ENCODE measurements at regions of chr2 and their contacts with region 1.

Region 1: DNA sequence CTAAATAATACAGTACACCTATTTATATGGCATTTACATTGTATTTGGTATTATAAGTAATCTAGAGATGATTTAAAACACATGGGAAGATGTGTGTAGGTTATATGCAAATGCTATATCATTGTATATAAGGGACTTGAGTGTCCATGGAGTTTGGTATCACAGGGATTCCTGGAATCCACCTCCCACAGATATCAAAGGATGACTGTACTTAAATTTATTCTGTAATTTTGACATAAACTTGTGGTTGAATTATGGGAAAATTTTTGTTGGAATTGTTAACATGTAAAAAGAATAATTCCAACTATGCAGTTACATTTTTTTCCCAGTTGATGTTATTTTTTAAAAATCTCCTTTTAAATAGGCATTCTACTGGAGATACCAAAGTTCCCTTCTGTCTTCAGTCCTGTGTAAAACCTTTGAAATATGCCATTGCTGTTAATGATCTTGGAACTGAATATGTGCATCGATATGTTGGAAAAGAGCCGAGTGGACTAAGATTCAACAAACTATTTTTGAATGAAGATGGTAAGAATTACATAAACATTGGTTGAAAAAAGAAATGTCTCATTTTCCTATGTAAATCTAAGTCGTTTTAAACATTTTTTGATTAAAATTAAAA is 24.1 kb downstream of the GLS start:
- DNase-seq: no peak
- H3K4me3 Mint-ChIP-seq: no peak overlapping the region
- H3K27ac Mint-ChIP-seq: no peak overlapping the region
- H3K4me1 Mint-ChIP-seq: peaks cover 9% of the 10 kb centered on the region
- H3K27me3 Mint-ChIP-seq: no peaks in the 10 kb centered on the region

Region 2: GRCh38 chr2:190887089-190887488 is 17.7 kb before region 1 on chr2:
- intact Hi-C with region 1: loop called (anchors 1 kb)
- DNase-seq: no peak
- H3K4me3 Mint-ChIP-seq: no peak overlapping the region
- H3K27ac Mint-ChIP-seq: no peak overlapping the region
- H3K4me1 Mint-ChIP-seq: peaks cover 62% of the 10 kb centered on the region
- H3K27me3 Mint-ChIP-seq: no peaks in the 10 kb centered on the region

Region 3: DNA sequence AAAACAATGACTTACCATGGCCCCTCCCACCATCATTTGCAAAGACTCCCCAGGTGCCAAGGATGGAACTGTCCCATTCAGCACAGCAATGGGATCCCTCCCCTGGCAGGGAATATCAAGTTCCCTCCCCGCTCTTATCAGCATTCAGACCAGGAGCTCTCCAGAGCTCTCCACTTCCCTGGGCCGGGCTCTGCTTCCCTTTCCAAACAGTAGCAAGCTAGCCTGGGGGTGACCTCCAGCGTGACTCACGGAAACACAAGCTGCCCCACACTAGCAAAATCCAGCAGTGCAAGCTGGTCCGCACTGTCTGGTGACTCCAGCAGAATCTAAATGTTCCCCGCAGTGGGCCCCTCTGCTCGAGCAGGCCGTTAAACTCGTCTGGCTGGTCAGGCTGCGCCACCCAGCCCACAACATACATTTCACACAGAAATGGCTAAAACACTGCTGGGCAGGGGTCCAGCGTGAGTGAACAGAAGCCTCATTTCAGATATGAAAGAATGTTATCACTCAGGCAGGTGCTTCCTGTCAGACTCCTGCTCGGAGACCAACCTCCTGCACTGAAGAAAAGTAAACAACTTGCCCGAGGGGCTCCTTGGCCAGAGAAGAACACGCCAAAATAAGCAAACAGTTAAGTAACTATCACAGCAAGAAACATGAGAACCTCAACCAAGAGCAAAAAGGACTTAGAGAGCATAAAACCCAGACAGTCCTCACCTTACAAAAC is 75.3 kb after region 1 on chr2:
- intact Hi-C with region 1: loop called (anchors 5 kb)
- DNase-seq: no peak
- H3K4me3 Mint-ChIP-seq: no peak overlapping the region
- H3K27ac Mint-ChIP-seq: peak overlapping the region; percentile 86
- H3K4me1 Mint-ChIP-seq: peaks cover 71% of the 10 kb centered on the region
- H3K27me3 Mint-ChIP-seq: no peaks in the 10 kb centered on the region